Heart right ventricle (tissue), 16 donors: ENCODE measurements at regions of chr2 and their contacts with region 1.

Region 1: GRCh38 chr2:156341452-156342253 is 9.1 kb upstream of the NR4A2 start:
- DNase-seq: peak; percentile 89 to 95
- ATAC-seq: peak; percentile 85 to 94 (median 90)
- H3K4me3 ChIP-seq: peak overlapping the region; percentile 70 to 96 (median 88)
- H3K27ac ChIP-seq: peak overlapping the region; percentile 99 to 100 (median 100)
- H3K4me1 ChIP-seq: peaks cover 0 to 47% (median 27%) of the 10 kb centered on the region in 9 donors
- H3K27me3 ChIP-seq: no peaks in the 10 kb centered on the region
- CTCF ChIP-seq: peak in 1 of 9 donors; percentile 8

Region 2: DNA sequence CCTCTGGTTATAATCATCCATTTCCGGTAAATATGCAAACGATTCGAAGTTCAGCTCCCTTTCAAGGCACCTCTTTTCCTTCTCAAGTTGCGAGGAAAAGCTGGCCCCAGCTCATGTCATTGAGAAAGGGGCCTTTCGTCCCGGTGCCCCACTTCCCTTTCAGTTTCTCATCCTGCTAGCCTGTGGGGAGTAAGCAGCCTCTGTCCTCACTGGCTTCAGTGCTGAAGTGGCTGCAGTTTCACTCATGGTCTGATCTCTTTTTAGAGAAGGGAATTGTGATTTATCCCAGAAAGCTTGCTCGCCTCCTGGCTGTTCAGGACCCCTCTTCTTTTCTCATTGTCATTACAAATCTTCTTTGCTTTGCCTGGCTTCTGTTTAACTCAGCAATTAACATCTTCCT is 216.6 kb before region 1 on chr2:
- intact Hi-C with region 1: no loop called
- DNase-seq: no peak
- ATAC-seq: no peak
- H3K4me3 ChIP-seq: no peak overlapping the region
- H3K27ac ChIP-seq: no peak overlapping the region
- H3K4me1 ChIP-seq: no peaks in the 10 kb centered on the region
- H3K27me3 ChIP-seq: peaks cover 0 to 3% (median 0%) of the 10 kb centered on the region in 7 donors
- CTCF ChIP-seq: no peak

Region 3: GRCh38 chr2:156400706-156401678 is 59.3 kb after region 1 on chr2:
- intact Hi-C with region 1: loop called in 8 of 10 experiments (anchors 1 to 10 kb)
- DNase-seq: peak; percentile 59 to 79
- ATAC-seq: peak; percentile 90 to 97 (median 92)
- H3K4me3 ChIP-seq: peak overlapping the region; percentile 51 to 85 (median 75)
- H3K27ac ChIP-seq: peak overlapping the region; percentile 52 to 97 (median 89)
- H3K4me1 ChIP-seq: peaks cover 0 to 26% (median 7%) of the 10 kb centered on the region in 9 donors
- H3K27me3 ChIP-seq: peaks cover 0 to 3% (median 0%) of the 10 kb centered on the region in 7 donors
- CTCF ChIP-seq: no peak

Region 4: GRCh38 chr2:156435715-156436496 is 94.3 kb after region 1 on chr2 and contains the start of gene GPD2:
- intact Hi-C with region 1: loop called in 7 of 10 experiments (anchors 1 to 10 kb)
- DNase-seq: peak; percentile 92 to 94
- ATAC-seq: peak; percentile 97 to 100 (median 99)
- H3K4me3 ChIP-seq: peak within 1 kb of the TSS; percentile 45 to 92 (median 72)
- H3K27ac ChIP-seq: peak within 1 kb of the TSS; percentile 92 to 100 (median 99)
- H3K4me1 ChIP-seq: peaks cover 5 to 47% (median 24%) of the 10 kb centered on the region in 9 donors
- H3K27me3 ChIP-seq: no peaks in the 10 kb centered on the region
- CTCF ChIP-seq: peak in 5 of 9 donors; percentile 11 to 47 (median 32)
- total RNA-seq, gene GPD2: 10.7 to 20.9 (median 15.5) TPM

Region 5: DNA sequence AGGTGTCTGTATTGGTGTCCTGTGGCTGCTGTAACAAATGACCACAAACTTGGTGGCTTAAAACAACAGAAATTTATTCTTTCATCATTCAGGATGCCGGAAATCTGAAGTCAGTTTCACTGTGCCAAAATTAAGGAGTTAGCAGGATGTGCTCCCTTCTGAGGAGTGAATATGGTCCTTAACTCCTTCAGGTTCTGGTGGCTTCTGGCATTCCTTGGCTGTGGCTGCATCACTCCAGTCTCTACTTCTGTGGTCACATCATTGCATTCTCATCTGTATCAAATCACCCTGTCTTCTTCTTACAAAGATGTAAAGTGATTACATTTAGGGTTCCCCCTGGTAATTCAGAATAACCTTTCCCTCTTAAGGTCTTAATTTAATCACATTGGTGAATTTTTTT is 107.1 kb after region 1 on chr2:
- intact Hi-C with region 1: no loop called
- DNase-seq: no peak
- ATAC-seq: no peak
- H3K4me3 ChIP-seq: no peak overlapping the region
- H3K27ac ChIP-seq: no peak overlapping the region
- H3K4me1 ChIP-seq: peaks cover 0 to 14% (median 0%) of the 10 kb centered on the region in 9 donors
- H3K27me3 ChIP-seq: no peaks in the 10 kb centered on the region
- CTCF ChIP-seq: no peak

Region 6: DNA sequence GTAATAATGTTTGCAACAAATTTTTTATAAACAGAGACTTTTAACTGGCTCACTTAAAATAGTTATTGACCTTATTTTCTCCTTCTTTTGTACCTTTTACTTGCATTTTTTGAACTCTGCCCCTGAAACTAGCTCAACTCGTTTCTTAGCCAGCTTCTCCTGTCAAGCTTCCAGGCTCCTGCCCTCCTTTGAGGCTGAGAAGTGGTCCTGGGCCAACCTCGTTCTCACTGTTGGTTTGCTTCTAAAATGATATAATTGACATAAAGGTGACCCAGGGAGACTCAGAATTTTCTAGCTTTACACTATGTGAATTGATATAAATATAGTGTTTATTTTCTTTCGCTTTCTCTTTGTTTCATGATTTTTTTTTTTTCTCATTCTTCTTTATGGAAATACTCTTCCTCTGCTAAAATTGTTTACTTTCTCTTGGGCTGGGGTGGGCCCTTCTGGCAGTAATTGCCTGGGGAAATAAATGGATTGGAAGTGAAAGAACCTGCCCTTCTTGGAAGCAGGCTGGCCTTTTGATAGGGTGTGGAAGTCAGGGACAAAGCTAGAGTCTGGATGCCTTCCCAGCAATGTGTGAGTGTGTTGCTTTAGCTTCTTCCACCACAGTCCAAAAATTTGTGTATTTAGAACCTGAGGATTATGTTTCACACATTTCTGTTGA is 125.2 kb after region 1 on chr2:
- intact Hi-C with region 1: loop called in 1 of 10 experiments (anchors 10 kb)
- DNase-seq: peak in 1 of 2 donors; percentile 79
- ATAC-seq: peak; percentile 82 to 95 (median 93)
- H3K4me3 ChIP-seq: peak overlapping the region in 5 of 10 donors; percentile 19 to 46 (median 25)
- H3K27ac ChIP-seq: peak overlapping the region; percentile 4 to 82 (median 58)
- H3K4me1 ChIP-seq: peaks cover 0 to 65% (median 45%) of the 10 kb centered on the region in 9 donors
- H3K27me3 ChIP-seq: no peaks in the 10 kb centered on the region
- CTCF ChIP-seq: no peak

Region 7: DNA sequence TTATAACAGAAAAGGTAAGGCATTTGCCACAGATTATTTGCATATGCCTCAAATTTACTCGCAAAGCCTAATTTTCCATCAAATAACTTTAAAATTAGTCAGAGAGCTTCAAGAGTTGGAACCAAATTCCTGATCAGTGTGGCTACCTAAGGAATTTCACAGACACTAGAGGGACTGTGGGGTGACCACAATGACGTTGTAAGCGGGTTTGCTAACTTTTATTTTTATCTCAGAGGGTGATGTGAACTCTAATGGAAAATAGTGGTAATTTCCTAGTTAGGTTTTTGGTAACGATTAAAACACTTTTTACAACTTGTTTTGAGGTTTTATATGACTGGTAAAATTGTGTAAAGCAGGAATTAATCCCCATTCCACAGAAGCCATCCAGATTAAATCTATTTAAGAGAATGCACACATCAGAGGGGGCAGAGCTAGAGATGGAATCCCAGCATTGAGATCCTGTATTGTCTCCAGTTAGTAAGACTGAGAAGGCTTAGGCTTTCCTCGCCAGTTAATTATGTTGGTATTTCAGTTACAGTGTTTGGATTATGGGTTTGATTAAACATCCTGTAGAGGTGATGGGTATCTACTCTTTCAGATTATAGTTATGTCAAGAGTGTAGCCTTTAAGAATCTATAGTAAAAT is 223.5 kb after region 1 on chr2:
- intact Hi-C with region 1: loop called in 1 of 10 experiments (anchors 10 kb)
- DNase-seq: no peak
- ATAC-seq: no peak
- H3K4me3 ChIP-seq: no peak overlapping the region
- H3K27ac ChIP-seq: no peak overlapping the region
- H3K4me1 ChIP-seq: peaks cover 0 to 18% (median 6%) of the 10 kb centered on the region in 9 donors
- H3K27me3 ChIP-seq: no peaks in the 10 kb centered on the region
- CTCF ChIP-seq: no peak

Region 8: GRCh38 chr2:156647377-156648010 is 305.8 kb after region 1 on chr2:
- intact Hi-C with region 1: no loop called
- DNase-seq: no peak
- ATAC-seq: no peak
- H3K4me3 ChIP-seq: no peak overlapping the region
- H3K27ac ChIP-seq: no peak overlapping the region
- H3K4me1 ChIP-seq: peaks cover 0 to 12% (median 0%) of the 10 kb centered on the region in 9 donors
- H3K27me3 ChIP-seq: no peaks in the 10 kb centered on the region
- CTCF ChIP-seq: no peak

Region 9: GRCh38 chr2:156704617-156705016 is 363.0 kb after region 1 on chr2:
- intact Hi-C with region 1: no loop called
- DNase-seq: peak in 1 of 2 donors; percentile 53
- ATAC-seq: peak in 6 of 8 donors; percentile 35 to 79 (median 62)
- H3K4me3 ChIP-seq: no peak overlapping the region
- H3K27ac ChIP-seq: peak overlapping the region in 8 of 10 donors; percentile 15 to 68 (median 52)
- H3K4me1 ChIP-seq: peaks cover 0 to 18% (median 6%) of the 10 kb centered on the region in 9 donors
- H3K27me3 ChIP-seq: no peaks in the 10 kb centered on the region
- CTCF ChIP-seq: no peak